CD4-positive, alpha-beta T cell (primary cell): ENCODE measurements at regions of chr1 and their contacts with region 1.

Region 1: GRCh38 chr1:7902478-7903085 is 38.1 kb downstream of the TNFRSF9 start:
- DNase-seq: peak; percentile 20 to 84 (median 38)
- ATAC-seq: peak; percentile 65
- H3K4me3 ChIP-seq: peak overlapping the region; percentile 42
- H3K4me3 Mint-ChIP-seq: peak overlapping the region; percentile 70
- H3K27ac ChIP-seq: no peak overlapping the region
- H3K27ac Mint-ChIP-seq: no peak overlapping the region
- H3K4me1 ChIP-seq: peaks cover 11% of the 10 kb centered on the region
- H3K4me1 Mint-ChIP-seq: no peaks in the 10 kb centered on the region
- H3K27me3 ChIP-seq: no peaks in the 10 kb centered on the region
- H3K27me3 Mint-ChIP-seq: no peaks in the 10 kb centered on the region
- CTCF ChIP-seq: peak; percentile 70

Region 2: DNA sequence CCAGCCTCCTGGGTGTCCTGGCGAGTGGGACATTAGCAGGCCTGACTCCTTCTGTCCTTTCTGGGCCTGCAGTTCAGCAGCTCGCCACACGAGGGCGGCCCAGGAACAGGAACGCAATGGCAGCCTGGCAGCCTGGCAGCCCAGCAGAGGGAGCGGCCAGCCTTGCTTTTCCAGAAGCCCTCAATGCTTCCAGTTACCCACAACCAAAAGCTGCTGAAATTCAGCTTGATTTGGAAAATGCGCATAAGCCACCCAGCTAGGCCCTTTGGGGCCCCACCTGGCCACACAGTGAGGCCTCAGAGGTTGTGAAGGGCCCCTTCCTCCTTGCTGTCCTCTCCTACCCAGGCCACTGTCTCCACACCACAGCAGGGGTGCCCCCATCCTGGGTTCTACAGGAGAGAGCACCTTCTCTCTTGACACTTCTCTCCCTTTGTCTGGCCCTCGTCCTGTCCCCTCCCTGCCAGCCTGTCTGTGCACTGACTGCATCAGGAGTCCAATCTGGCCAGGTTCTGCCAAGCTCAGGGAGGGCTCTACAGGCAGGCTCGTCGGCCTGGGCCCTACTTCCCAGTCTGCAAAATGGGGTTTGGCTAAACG is 234.9 kb before region 1 on chr1:
- CTCF ChIA-PET with region 1: no interaction called
- POLR2A ChIA-PET with region 1: no interaction called
- intact Hi-C with region 1: loop called in 1 of 2 experiments (anchors 1 kb)
- DNase-seq: peak; percentile 67 to 88 (median 81)
- ATAC-seq: peak; percentile 79
- H3K4me3 ChIP-seq: no peak overlapping the region
- H3K4me3 Mint-ChIP-seq: no peak overlapping the region
- H3K27ac ChIP-seq: no peak overlapping the region
- H3K27ac Mint-ChIP-seq: no peak overlapping the region
- H3K4me1 ChIP-seq: peaks cover 21% of the 10 kb centered on the region
- H3K4me1 Mint-ChIP-seq: no peaks in the 10 kb centered on the region
- H3K27me3 ChIP-seq: no peaks in the 10 kb centered on the region
- H3K27me3 Mint-ChIP-seq: no peaks in the 10 kb centered on the region
- CTCF ChIP-seq: peak; percentile 99

Region 3: DNA sequence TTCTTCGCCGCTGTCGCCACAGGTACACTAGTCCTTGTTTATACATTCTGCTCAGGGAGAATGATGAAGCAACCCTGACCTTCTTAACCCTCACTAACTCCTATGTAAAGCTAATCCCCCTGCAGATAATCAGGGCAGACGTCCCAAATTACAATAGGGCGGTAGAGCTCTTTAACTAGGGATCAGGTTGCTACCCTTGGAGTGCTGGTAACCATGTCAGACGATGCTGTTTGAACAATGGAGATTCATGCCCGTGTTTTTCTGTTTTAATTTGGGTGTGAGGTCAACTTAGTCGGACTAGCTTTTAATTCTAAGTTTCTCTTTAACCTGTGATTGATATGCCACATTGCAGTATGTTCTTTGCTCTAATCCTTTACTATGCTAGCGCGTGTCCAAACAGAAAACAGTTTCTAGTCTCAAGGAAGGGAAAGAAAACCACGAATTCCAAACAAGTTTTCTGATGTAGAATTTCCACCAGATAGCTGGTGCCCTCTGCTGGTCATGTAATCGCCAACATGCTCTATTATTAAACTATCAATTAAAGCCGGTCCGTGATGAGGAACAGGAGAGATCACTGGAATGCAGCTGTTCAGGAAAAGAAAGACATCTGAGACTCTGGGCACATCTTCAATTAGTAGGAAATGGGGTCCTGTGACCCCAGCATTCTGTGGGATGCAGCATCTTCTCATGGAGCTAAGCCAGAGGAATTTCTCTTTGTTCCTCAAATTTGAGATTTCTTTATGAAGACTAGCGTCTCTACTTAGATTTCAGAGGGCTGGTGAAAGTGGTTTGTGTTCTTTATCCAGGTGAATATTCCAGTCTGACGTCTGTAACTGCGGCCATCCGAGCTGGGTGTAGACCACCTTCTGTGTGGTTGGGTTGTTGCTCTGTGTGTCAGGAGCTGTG is 149.8 kb before region 1 on chr1:
- CTCF ChIA-PET with region 1: no interaction called
- POLR2A ChIA-PET with region 1: no interaction called
- intact Hi-C with region 1: loop called in 1 of 2 experiments (anchors 5 kb)
- DNase-seq: peak; percentile 17 to 77 (median 39)
- ATAC-seq: peak; percentile 61
- H3K4me3 ChIP-seq: no peak overlapping the region
- H3K4me3 Mint-ChIP-seq: peak overlapping the region; percentile 71
- H3K27ac ChIP-seq: no peak overlapping the region
- H3K27ac Mint-ChIP-seq: no peak overlapping the region
- H3K4me1 ChIP-seq: peaks cover 20% of the 10 kb centered on the region
- H3K4me1 Mint-ChIP-seq: peaks cover 32% of the 10 kb centered on the region
- H3K27me3 ChIP-seq: no peaks in the 10 kb centered on the region
- H3K27me3 Mint-ChIP-seq: peaks cover 12% of the 10 kb centered on the region
- CTCF ChIP-seq: peak; percentile 90

Region 4: DNA sequence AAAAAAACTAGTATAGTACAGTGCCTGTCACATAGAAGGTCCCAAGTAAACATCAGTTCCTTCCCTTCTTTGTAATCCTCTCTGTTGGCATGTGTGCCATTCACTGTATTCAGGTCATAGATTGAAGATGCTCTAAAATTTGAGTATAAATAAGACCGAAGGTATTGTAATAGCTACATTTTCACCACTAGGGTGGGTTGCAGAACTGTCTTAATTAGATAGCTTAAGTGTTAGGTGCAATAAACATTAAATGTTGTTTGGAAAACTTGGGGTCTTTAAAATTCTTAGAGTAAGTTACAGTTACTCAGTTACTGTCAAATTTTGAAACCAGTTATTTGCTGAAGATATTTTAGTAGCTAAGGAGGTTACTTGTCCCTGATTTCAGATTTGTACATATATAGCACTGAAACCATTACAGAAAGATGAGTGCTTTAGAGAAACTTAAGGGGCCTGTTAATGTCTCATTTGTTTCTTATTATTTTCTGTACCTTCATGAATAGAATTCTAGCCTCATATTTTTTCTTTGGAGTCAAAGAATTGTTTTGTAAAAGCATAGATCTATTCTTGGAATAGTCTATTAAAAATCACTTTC is 94.2 kb before region 1 on chr1:
- CTCF ChIA-PET with region 1: no interaction called
- POLR2A ChIA-PET with region 1: no interaction called
- intact Hi-C with region 1: loop called in 1 of 2 experiments (anchors 5 kb)
- DNase-seq: peak in 3 of 14 experiments; percentile 35 to 43 (median 41)
- ATAC-seq: no peak
- H3K4me3 ChIP-seq: no peak overlapping the region
- H3K4me3 Mint-ChIP-seq: no peak overlapping the region
- H3K27ac ChIP-seq: no peak overlapping the region
- H3K27ac Mint-ChIP-seq: no peak overlapping the region
- H3K4me1 ChIP-seq: no peaks in the 10 kb centered on the region
- H3K4me1 Mint-ChIP-seq: no peaks in the 10 kb centered on the region
- H3K27me3 ChIP-seq: no peaks in the 10 kb centered on the region
- H3K27me3 Mint-ChIP-seq: no peaks in the 10 kb centered on the region
- CTCF ChIP-seq: peak; percentile 58